Sigmoid colon (tissue), 7 donors: ENCODE measurements at regions of chr12 and their contacts with region 1.

Region 1: GRCh38 chr12:93137656-93138612 is 208.8 kb upstream of the EEA1 start:
- DNase-seq: no peak
- H3K4me3 ChIP-seq: no peak overlapping the region
- H3K27ac ChIP-seq: peak overlapping the region; percentile 25 to 65 (median 58)
- H3K4me1 ChIP-seq: peaks cover 0 to 36% (median 26%) of the 10 kb centered on the region in 4 donors
- H3K27me3 ChIP-seq: no peaks in the 10 kb centered on the region
- CTCF ChIP-seq: no peak
- EP300 ChIP-seq: peak in 3 of 4 donors; percentile 43 to 75 (median 43)
- POLR2A ChIP-seq: no peak

Region 2: DNA sequence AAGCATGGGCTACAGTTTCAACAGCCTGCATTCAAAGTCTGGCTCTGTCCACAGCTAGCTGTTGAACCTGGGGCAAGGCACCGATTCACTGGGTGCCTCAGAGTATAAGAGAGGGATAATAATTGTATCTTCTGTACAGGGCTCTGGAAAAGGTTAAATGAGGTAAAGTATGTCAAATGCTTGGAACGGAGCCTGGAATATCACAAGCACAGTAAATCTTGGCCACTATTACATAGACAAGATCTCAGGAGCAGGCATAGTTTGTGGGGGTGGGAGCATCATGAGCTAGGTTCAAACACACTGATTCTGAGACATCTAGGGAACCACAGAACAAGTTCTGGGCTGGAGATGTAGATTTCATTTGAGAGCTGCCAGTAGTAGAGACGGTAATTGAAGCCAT is 36.1 kb after region 1 on chr12:
- intact Hi-C with region 1: loop called (anchors 5 kb)
- DNase-seq: no peak
- H3K4me3 ChIP-seq: no peak overlapping the region
- H3K27ac ChIP-seq: peak overlapping the region; percentile 66 to 82 (median 74)
- H3K4me1 ChIP-seq: peaks cover 0 to 61% (median 53%) of the 10 kb centered on the region in 4 donors
- H3K27me3 ChIP-seq: no peaks in the 10 kb centered on the region
- CTCF ChIP-seq: no peak
- EP300 ChIP-seq: no peak
- POLR2A ChIP-seq: no peak

Region 3: DNA sequence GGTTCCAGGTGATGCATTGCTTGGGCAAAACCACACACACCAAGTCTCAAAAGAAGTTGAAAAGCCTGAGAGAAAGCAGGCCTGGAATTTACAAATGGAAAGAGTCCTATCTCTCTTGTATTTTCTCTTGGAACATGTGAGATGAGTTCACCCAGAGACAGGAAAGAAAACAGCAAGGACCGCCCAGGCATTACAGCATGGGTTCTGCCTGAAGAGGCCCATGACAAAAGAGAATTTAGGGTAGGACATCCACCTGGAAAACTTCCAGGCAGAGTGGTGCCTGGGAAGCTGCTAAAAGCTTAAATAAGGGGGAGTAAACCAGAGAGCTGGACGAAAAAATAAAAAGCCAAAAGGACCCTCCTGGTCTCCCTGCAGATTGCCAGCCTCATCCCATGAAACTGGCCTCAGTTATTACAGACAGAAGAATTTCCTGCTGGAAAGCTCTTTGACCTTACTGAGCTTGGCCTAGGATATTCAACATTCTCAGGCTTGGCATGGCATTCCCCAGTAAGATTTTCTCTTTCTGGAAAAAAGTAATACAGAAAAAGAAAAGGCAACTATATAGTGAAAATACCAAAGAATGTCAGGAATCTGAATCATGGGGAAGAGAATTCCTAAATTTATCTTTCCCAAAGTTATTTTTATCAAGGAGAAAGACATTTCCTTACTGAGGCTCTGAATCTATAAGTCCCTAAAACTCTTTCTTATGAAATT is 118.5 kb after region 1 on chr12:
- intact Hi-C with region 1: no loop called
- DNase-seq: no peak
- H3K4me3 ChIP-seq: no peak overlapping the region
- H3K27ac ChIP-seq: no peak overlapping the region
- H3K4me1 ChIP-seq: peaks cover 0 to 6% (median 2%) of the 10 kb centered on the region in 4 donors
- H3K27me3 ChIP-seq: no peaks in the 10 kb centered on the region
- CTCF ChIP-seq: no peak
- EP300 ChIP-seq: no peak
- POLR2A ChIP-seq: no peak